Transverse colon (tissue), 4 donors: ENCODE measurements at regions of chr2 and their contacts with region 1.

Region 1: GRCh38 chr2:210795506-210795905 is 239.1 kb downstream of the CPS1 start:
- DNase-seq: no peak
- H3K4me3 ChIP-seq: no peak overlapping the region
- H3K27ac ChIP-seq: no peak overlapping the region
- H3K4me1 ChIP-seq: no peaks in the 10 kb centered on the region
- H3K27me3 ChIP-seq: no peaks in the 10 kb centered on the region
- CTCF ChIP-seq: no peak
- EP300 ChIP-seq: no peak
- POLR2A ChIP-seq: no peak

Region 2: DNA sequence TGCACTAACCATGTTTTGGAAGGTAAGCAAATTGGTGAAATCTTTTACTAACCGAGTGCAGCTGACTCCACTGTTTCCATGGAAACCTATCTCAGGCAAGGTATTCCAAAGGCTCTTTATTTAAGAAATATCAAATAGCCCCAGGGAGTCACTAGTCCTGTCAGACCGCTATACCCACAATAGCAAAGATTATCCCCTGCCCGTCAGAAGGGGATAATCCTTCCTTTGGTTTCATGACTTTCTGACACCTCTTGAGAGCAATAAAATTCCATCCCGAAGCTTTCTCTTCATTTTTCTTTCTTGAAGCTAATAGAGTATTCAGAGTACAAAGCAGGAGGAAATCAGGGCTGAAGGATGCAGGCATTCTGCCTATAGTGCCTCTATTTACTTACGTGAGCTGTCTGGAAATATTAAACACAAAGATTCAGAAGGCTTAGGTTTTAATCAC is 1406.3 kb before region 1 on chr2:
- in situ Hi-C with region 1: no loop called
- intact Hi-C with region 1: loop called (anchors 5 kb)
- DNase-seq: no peak
- H3K4me3 ChIP-seq: no peak overlapping the region
- H3K27ac ChIP-seq: no peak overlapping the region
- H3K4me1 ChIP-seq: no peaks in the 10 kb centered on the region
- H3K27me3 ChIP-seq: no peaks in the 10 kb centered on the region
- CTCF ChIP-seq: no peak
- EP300 ChIP-seq: no peak
- POLR2A ChIP-seq: no peak

Region 3: DNA sequence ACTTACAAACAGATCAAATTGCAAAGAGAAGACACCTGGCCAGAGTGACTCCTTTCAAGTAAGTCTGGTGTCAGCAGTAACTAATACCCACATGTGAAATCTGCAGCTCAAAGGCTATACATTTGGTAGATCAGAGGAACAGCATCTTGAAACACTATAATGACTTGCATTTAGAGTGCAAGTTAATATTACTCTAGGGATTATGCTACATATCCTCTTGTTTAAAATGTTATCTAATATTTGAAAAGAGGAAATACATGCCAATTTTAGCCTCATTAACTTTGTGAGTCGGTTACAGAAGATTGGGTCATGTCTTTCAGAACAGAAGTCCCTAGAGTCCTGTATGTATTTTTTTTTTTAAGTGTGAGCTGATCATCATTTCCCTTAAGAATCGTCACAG is 334.1 kb before region 1 on chr2:
- in situ Hi-C with region 1: no loop called
- intact Hi-C with region 1: no loop called
- DNase-seq: no peak
- H3K4me3 ChIP-seq: no peak overlapping the region
- H3K27ac ChIP-seq: no peak overlapping the region
- H3K4me1 ChIP-seq: no peaks in the 10 kb centered on the region
- H3K27me3 ChIP-seq: no peaks in the 10 kb centered on the region
- CTCF ChIP-seq: no peak
- EP300 ChIP-seq: no peak
- POLR2A ChIP-seq: no peak

Region 4: DNA sequence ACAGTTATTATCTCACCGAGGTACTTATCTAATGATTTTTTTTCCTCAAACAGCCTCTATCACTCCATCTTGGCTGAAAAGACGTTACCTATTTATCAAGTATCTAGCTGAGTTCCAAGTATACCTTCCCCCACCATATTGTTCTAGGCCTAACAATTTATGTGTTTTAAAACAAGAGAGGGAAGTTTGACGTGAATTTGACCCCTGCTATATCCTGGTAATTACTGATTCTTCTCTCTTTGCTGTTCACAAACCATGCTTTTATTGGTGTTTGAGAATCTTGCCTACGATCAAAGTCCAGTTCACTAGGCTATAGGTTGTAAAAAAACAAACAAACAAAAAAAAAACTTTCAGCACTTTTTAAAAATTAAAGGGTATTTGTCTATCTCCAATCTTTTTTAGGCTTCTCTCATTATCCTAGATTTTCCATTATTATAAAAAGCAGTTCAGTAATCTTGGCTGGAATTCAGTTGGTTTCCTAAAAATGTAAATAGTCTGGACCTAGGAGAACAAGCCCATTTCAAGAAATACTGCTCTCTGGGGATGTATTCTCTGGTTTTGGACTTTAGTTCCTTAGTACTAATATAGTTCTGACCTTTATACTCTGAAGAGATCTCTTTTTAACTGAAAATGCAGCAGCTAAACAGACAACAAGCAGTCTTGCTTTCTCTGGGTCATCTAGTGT is 266.2 kb after region 1 on chr2:
- in situ Hi-C with region 1: no loop called
- intact Hi-C with region 1: no loop called
- DNase-seq: no peak
- H3K4me3 ChIP-seq: no peak overlapping the region
- H3K27ac ChIP-seq: no peak overlapping the region
- H3K4me1 ChIP-seq: peaks cover 0 to 7% (median 0%) of the 10 kb centered on the region in 4 donors
- H3K27me3 ChIP-seq: no peaks in the 10 kb centered on the region
- CTCF ChIP-seq: no peak
- EP300 ChIP-seq: no peak
- POLR2A ChIP-seq: no peak